ENCODE measurements at regions of chrX and their contacts with region 1.

Region 1: GRCh38 chrX:13734278-13735172 is at the starts of genes OFD1 and TRAPPC2:
- DNase-seq: peak; percentile 73 to 95 (median 87)
- ATAC-seq: peak; percentile 86 to 89
- H3K4me3 Mint-ChIP-seq: peak within 1 kb of the TSS; percentile 93 to 99 (median 98)
- H3K27ac Mint-ChIP-seq: peak within 1 kb of the TSS; percentile 95 to 100 (median 98)
- H3K4me1 Mint-ChIP-seq: peaks cover 18 to 69% (median 39%) of the 10 kb centered on the region in 4 donors
- H3K27me3 Mint-ChIP-seq: no peaks in the 10 kb centered on the region
- polyA plus RNA-seq, gene OFD1: 27.3 to 37.6 (median 33.8) TPM
- polyA plus RNA-seq, gene TRAPPC2: 25.7 to 51.5 (median 31.9) TPM

Region 2: GRCh38 chrX:13620207-13620606 is 114.3 kb before region 1 on chrX:
- POLR2A ChIA-PET with region 1: no interaction called
- DNase-seq: no peak
- ATAC-seq: no peak
- H3K4me3 Mint-ChIP-seq: no peak overlapping the region
- H3K27ac Mint-ChIP-seq: peak overlapping the region in 1 of 10 donors; percentile 6
- H3K4me1 Mint-ChIP-seq: peaks cover 0 to 2% (median 0%) of the 10 kb centered on the region in 4 donors
- H3K27me3 Mint-ChIP-seq: no peaks in the 10 kb centered on the region

Region 3: DNA sequence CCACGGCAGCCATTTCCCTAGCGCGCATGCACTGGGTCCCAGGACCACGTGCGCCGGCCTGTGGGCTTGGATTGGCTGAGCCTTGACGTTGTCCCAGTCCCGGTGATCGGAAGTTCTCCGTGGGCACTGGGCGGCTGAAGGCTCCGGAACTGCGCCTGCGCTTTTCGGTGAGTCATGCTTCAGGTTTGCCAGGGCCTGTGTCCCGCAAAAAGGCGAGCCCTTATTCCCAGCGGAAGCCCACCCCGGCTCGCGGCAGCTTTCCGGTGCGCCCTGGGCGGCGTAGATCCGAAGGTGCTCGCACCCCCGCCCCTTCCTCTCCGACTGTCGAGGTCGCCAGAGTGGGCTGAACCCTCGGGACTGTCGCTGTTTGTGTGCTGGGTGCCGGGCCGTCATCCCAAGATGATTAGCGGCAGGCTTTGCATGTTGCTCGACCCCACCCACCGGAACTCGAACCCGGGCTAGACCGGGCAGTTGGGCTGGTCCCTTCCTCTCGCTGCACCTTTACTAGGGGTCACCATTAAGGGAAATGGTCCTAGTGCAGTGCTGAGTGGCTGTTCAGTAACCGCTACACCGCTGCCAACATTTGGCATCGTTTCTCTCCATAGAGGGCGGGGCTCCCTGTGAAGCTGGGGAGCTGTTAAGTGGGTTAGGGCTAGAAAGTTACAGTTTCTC is 81.4 kb before region 1 on chrX and contains the start of gene TCEANC:
- POLR2A ChIA-PET with region 1: interaction called, 19 read pairs
- DNase-seq: peak; percentile 83 to 96 (median 91)
- ATAC-seq: peak; percentile 95 to 96
- H3K4me3 Mint-ChIP-seq: peak within 1 kb of the TSS; percentile 85 to 98 (median 92)
- H3K27ac Mint-ChIP-seq: peak within 1 kb of the TSS; percentile 92 to 99 (median 98)
- H3K4me1 Mint-ChIP-seq: peaks cover 1 to 20% (median 17%) of the 10 kb centered on the region in 4 donors
- H3K27me3 Mint-ChIP-seq: no peaks in the 10 kb centered on the region
- polyA plus RNA-seq, gene TCEANC: 6.2 to 11.5 (median 8.7) TPM

Region 4: DNA sequence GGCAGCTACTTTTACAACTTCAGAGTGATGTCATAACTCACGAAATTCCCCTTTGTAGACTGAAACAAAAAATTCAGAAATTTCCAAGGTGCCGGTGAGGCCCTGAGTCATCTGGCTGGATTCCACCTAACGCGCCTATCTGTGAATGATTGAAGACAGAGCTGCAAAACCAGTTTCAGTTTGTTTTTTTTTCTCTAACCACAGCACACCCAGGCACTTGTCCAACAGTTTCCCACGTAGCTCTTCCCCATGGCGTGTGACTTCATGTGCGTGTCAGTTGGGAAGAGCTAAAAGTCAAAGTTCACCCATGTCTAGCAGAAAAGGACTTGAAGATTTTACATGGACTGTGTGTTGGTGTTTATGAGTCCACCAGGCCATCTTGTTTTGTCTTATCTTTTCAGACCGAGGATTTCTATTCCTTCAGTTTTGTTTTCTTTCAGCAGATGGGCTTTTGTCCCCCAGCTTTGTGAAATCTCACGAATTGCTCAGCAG is 65.2 kb before region 1 on chrX:
- POLR2A ChIA-PET with region 1: no interaction called
- DNase-seq: peak in 1 of 10 donors; percentile 2
- ATAC-seq: peak; percentile 42 to 50
- H3K4me3 Mint-ChIP-seq: peak overlapping the region in 3 of 10 donors; percentile 25 to 70 (median 39)
- H3K27ac Mint-ChIP-seq: peak overlapping the region in 5 of 10 donors; percentile 49 to 83 (median 57)
- H3K4me1 Mint-ChIP-seq: peaks cover 0 to 11% (median 3%) of the 10 kb centered on the region in 4 donors
- H3K27me3 Mint-ChIP-seq: no peaks in the 10 kb centered on the region

Region 5: GRCh38 chrX:13688958-13689740 is 45.4 kb before region 1 on chrX and contains the start of gene RAB9A:
- POLR2A ChIA-PET with region 1: interaction called, 31 read pairs
- DNase-seq: peak; percentile 65 to 84 (median 76)
- ATAC-seq: peak; percentile 91 to 94
- H3K4me3 Mint-ChIP-seq: peak within 1 kb of the TSS; percentile 84 to 96 (median 92)
- H3K27ac Mint-ChIP-seq: peak within 1 kb of the TSS; percentile 83 to 99 (median 95)
- H3K4me1 Mint-ChIP-seq: peaks cover 16 to 57% (median 36%) of the 10 kb centered on the region in 4 donors
- H3K27me3 Mint-ChIP-seq: no peaks in the 10 kb centered on the region
- polyA plus RNA-seq, gene RAB9A: 15.6 to 22.1 (median 17.3) TPM

Region 6: GRCh38 chrX:13699183-13699826 is 35.2 kb before region 1 on chrX:
- POLR2A ChIA-PET with region 1: interaction called, 15 read pairs
- DNase-seq: no peak
- ATAC-seq: no peak
- H3K4me3 Mint-ChIP-seq: peak overlapping the region in 3 of 10 donors; percentile 8 to 57 (median 23)
- H3K27ac Mint-ChIP-seq: peak overlapping the region in 2 of 10 donors; percentile 56 to 71
- H3K4me1 Mint-ChIP-seq: peaks cover 19 to 92% (median 61%) of the 10 kb centered on the region in 4 donors
- H3K27me3 Mint-ChIP-seq: no peaks in the 10 kb centered on the region

Region 7: DNA sequence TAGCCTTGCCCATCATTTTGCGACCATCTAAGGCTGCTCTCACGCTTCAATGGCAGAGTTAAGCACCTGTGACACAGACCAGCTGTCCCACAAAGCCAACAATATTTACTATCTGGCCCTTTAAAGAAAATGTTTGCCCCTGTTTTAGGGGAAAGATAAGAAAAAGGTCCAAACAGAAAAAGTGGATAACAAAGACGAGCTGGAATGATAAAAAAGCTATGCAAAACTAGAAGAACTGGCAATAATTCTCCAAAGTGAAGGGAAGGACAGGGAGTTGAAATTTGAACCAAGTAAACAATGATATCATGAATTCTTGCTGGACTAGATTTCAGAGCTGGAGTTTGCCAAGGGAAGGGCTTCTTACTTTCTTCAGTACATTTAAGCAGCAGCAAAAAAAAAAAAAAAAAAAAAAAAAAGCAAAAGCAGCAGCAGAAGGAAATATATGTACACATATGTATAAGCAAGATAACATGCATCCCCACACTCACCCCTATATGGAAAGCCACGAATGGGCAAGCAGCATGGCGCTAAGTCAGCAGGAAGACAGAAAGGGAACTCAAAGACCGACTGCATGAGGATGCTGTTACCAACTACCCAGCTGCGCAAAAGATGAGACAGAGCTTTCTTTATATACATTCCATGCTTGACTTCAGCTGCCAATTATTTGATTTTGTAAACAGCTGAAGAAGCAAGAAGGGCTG is 12.6 kb before region 1 on chrX:
- POLR2A ChIA-PET with region 1: interaction called, 35 read pairs
- DNase-seq: no peak
- ATAC-seq: no peak
- H3K4me3 Mint-ChIP-seq: peak overlapping the region in 1 of 10 donors; percentile 19
- H3K27ac Mint-ChIP-seq: peak overlapping the region; percentile 31 to 86 (median 70)
- H3K4me1 Mint-ChIP-seq: peaks cover 24 to 73% (median 56%) of the 10 kb centered on the region in 4 donors
- H3K27me3 Mint-ChIP-seq: no peaks in the 10 kb centered on the region

Region 8: GRCh38 chrX:14029425-14030173 is 295.1 kb after region 1 on chrX and contains the start of gene GEMIN8:
- POLR2A ChIA-PET with region 1: interaction called, 13 read pairs
- DNase-seq: peak; percentile 74 to 93 (median 85)
- ATAC-seq: peak; percentile 94
- H3K4me3 Mint-ChIP-seq: peak within 1 kb of the TSS; percentile 83 to 99 (median 96)
- H3K27ac Mint-ChIP-seq: peak within 1 kb of the TSS; percentile 94 to 100 (median 98)
- H3K4me1 Mint-ChIP-seq: peaks cover 14 to 36% (median 25%) of the 10 kb centered on the region in 4 donors
- H3K27me3 Mint-ChIP-seq: peaks cover 0 to 6% (median 1%) of the 10 kb centered on the region in 5 donors
- polyA plus RNA-seq, gene GEMIN8: 20.7 to 25.9 (median 23.9) TPM

Measured in naive thymus-derived CD8-positive, alpha-beta T cell (primary cell).